ENCODE measurements at regions of chr16 and their contacts with region 1.

Region 1: GRCh38 chr16:87297918-87298631 is 19.1 kb downstream of the C16orf95 start:
- DNase-seq: peak; percentile 82
- ATAC-seq: peak; percentile 87
- H3K4me3 Mint-ChIP-seq: no peak overlapping the region
- H3K27ac Mint-ChIP-seq: no peak overlapping the region
- H3K4me1 Mint-ChIP-seq: no peaks in the 10 kb centered on the region
- H3K27me3 Mint-ChIP-seq: no peaks in the 10 kb centered on the region
- CTCF ChIP-seq: peak; percentile 49

Region 2: DNA sequence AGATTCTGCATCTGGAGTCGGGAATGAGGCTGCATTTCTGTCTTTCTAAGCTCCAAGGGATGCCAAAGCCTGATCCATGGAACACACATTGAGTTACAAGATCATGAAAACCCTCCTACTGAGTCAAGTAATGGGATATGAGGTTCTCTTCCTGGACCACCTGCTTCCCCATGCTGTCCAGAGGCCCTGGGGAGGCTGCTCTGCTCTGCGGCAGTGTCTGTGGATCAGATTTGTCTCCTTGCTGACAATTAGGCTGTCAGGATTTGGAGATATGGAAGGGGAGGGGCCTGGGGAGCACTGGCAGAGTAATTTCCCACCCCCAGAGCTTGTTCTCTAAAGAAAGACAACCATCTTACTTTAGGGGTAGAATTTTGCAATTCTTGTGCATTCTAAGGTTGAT is 13.9 kb before region 1 on chr16:
- CTCF ChIA-PET with region 1: interaction called, 31 read pairs
- POLR2A ChIA-PET with region 1: no interaction called
- DNase-seq: no peak
- ATAC-seq: no peak
- H3K4me3 Mint-ChIP-seq: no peak overlapping the region
- H3K27ac Mint-ChIP-seq: no peak overlapping the region
- H3K4me1 Mint-ChIP-seq: no peaks in the 10 kb centered on the region
- H3K27me3 Mint-ChIP-seq: no peaks in the 10 kb centered on the region
- CTCF ChIP-seq: no peak